ENCODE measurements at regions of chr1 and their contacts with region 1.

Region 1: DNA sequence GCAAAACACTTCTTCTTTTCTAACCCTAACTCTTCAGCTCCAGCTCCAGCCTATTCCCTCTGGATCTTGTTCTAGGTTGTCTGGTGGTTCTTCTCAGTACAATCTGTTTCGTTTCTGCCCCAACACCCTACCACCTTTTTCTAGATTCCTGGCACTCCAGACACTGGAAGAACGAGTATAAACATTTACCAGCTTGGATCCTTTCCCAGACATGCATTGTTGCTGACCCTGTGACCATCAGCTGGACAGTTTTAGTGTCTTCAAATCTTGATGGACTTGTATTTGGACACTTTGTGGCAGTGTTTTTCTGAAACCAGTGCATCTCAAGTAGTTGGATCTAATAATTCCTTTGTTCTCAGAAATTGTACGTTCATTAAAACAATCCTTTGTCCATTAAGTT is 30.6 kb upstream of the CACNA1E start:
- DNase-seq: no peak
- H3K4me3 ChIP-seq: no peak overlapping the region
- H3K4me3 Mint-ChIP-seq: no peak overlapping the region
- H3K27ac Mint-ChIP-seq: peak overlapping the region; percentile 94
- H3K4me1 ChIP-seq: peaks cover 50% of the 10 kb centered on the region
- H3K4me1 Mint-ChIP-seq: peaks cover 34% of the 10 kb centered on the region
- H3K27me3 ChIP-seq: no peaks in the 10 kb centered on the region
- H3K27me3 Mint-ChIP-seq: no peaks in the 10 kb centered on the region
- CTCF ChIP-seq: no peak

Region 2: GRCh38 chr1:181469829-181470228 is 17.1 kb after region 1 on chr1:
- CTCF ChIA-PET with region 1: no interaction called
- POLR2A ChIA-PET with region 1: no interaction called
- intact Hi-C with region 1: loop called (anchors 1 kb)
- DNase-seq: peak; percentile 77 to 86
- H3K4me3 ChIP-seq: no peak overlapping the region
- H3K4me3 Mint-ChIP-seq: peak overlapping the region; percentile 44
- H3K27ac Mint-ChIP-seq: peak overlapping the region; percentile 69
- H3K4me1 ChIP-seq: peaks cover 43% of the 10 kb centered on the region
- H3K4me1 Mint-ChIP-seq: peaks cover 29% of the 10 kb centered on the region
- H3K27me3 ChIP-seq: no peaks in the 10 kb centered on the region
- H3K27me3 Mint-ChIP-seq: no peaks in the 10 kb centered on the region
- CTCF ChIP-seq: no peak